CD4-positive, alpha-beta memory T cell (primary cell): ENCODE measurements at regions of chr18 and their contacts with region 1.

Region 1: GRCh38 chr18:13137670-13138419 is 80.7 kb upstream of the LDLRAD4 start:
- DNase-seq: peak; percentile 77 to 86 (median 81)
- H3K4me3 ChIP-seq: peak overlapping the region; percentile 69 to 92
- H3K4me3 Mint-ChIP-seq: peak overlapping the region; percentile 90 to 100 (median 97)
- H3K27ac ChIP-seq: peak overlapping the region; percentile 54
- H3K27ac Mint-ChIP-seq: peak overlapping the region; percentile 93 to 99 (median 96)
- H3K4me1 ChIP-seq: peaks cover 19% of the 10 kb centered on the region
- H3K4me1 Mint-ChIP-seq: peaks cover 19 to 29% (median 24%) of the 10 kb centered on the region in 4 donors
- H3K27me3 ChIP-seq: no peaks in the 10 kb centered on the region
- H3K27me3 Mint-ChIP-seq: no peaks in the 10 kb centered on the region

Region 2: GRCh38 chr18:12990967-12991838 is 146.6 kb before region 1 on chr18 and contains the start of gene CEP192:
- CTCF ChIA-PET with region 1: no interaction called
- POLR2A ChIA-PET with region 1: interaction called, 5 read pairs
- intact Hi-C with region 1: loop called (anchors 5 kb)
- DNase-seq: peak; percentile 97 to 98 (median 98)
- H3K4me3 ChIP-seq: peak within 1 kb of the TSS; percentile 70 to 86
- H3K4me3 Mint-ChIP-seq: peak within 1 kb of the TSS; percentile 93 to 99 (median 98)
- H3K27ac ChIP-seq: peak within 1 kb of the TSS; percentile 93
- H3K27ac Mint-ChIP-seq: peak within 1 kb of the TSS; percentile 88 to 99 (median 97)
- H3K4me1 ChIP-seq: peaks cover 42% of the 10 kb centered on the region
- H3K4me1 Mint-ChIP-seq: peaks cover 0 to 29% (median 23%) of the 10 kb centered on the region in 4 donors
- H3K27me3 ChIP-seq: no peaks in the 10 kb centered on the region
- H3K27me3 Mint-ChIP-seq: no peaks in the 10 kb centered on the region
- total RNA-seq, gene CEP192: 42.5 to 45.5 TPM

Region 3: GRCh38 chr18:13124411-13124810 is 13.4 kb before region 1 on chr18:
- CTCF ChIA-PET with region 1: interaction called, 6 read pairs
- POLR2A ChIA-PET with region 1: interaction called, 17 read pairs
- intact Hi-C with region 1: no loop called
- DNase-seq: no peak
- H3K4me3 ChIP-seq: no peak overlapping the region
- H3K4me3 Mint-ChIP-seq: no peak overlapping the region
- H3K27ac ChIP-seq: no peak overlapping the region
- H3K27ac Mint-ChIP-seq: peak overlapping the region in 1 of 7 donors; percentile 17
- H3K4me1 ChIP-seq: no peaks in the 10 kb centered on the region
- H3K4me1 Mint-ChIP-seq: no peaks in the 10 kb centered on the region
- H3K27me3 ChIP-seq: no peaks in the 10 kb centered on the region
- H3K27me3 Mint-ChIP-seq: no peaks in the 10 kb centered on the region

Region 4: GRCh38 chr18:13159579-13159978 is 21.7 kb after region 1 on chr18:
- CTCF ChIA-PET with region 1: interaction called, 12 read pairs
- POLR2A ChIA-PET with region 1: no interaction called
- intact Hi-C with region 1: no loop called
- DNase-seq: peak in 4 of 5 donors; percentile 48 to 58 (median 56)
- H3K4me3 ChIP-seq: no peak overlapping the region
- H3K4me3 Mint-ChIP-seq: peak overlapping the region in 2 of 8 donors; percentile 23 to 43
- H3K27ac ChIP-seq: no peak overlapping the region
- H3K27ac Mint-ChIP-seq: no peak overlapping the region
- H3K4me1 ChIP-seq: no peaks in the 10 kb centered on the region
- H3K4me1 Mint-ChIP-seq: peaks cover 0 to 5% (median 2%) of the 10 kb centered on the region in 4 donors
- H3K27me3 ChIP-seq: no peaks in the 10 kb centered on the region
- H3K27me3 Mint-ChIP-seq: peaks cover 2 to 3% of the 10 kb centered on the region in 2 donors

Region 5: DNA sequence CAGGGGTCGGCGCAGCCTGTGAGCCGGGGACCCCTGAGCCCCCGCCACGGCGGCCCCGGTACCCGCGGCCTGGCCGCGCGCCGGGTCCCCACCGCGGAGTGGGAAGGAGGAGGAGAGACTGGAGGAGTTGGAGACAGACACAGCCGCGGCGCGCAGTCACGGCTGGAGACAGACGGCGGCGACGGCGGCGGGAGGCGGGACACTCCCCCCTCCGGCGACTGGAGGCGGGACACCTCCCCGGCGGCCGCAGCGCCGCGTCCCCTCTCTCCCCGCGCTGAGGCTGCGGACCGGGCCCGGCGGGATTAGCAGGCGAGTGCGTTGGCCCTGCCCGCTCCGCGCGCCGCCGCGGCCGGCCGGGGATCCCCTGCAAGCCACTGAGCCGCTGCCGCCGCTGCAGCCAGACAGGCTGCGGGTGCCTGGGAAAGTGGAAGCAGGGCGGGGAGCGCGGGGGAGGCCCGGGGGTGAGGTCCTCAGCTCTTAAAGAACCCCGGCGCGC is 79.7 kb after region 1 on chr18:
- CTCF ChIA-PET with region 1: no interaction called
- POLR2A ChIA-PET with region 1: no interaction called
- intact Hi-C with region 1: no loop called
- DNase-seq: peak; percentile 58 to 71 (median 63)
- H3K4me3 ChIP-seq: peak overlapping the region in 1 of 2 donors; percentile 24
- H3K4me3 Mint-ChIP-seq: peak overlapping the region in 1 of 8 donors; percentile 45
- H3K27ac ChIP-seq: no peak overlapping the region
- H3K27ac Mint-ChIP-seq: no peak overlapping the region
- H3K4me1 ChIP-seq: peaks cover 26% of the 10 kb centered on the region
- H3K4me1 Mint-ChIP-seq: peaks cover 13 to 31% (median 24%) of the 10 kb centered on the region in 4 donors
- H3K27me3 ChIP-seq: no peaks in the 10 kb centered on the region
- H3K27me3 Mint-ChIP-seq: peaks cover 4 to 37% of the 10 kb centered on the region in 2 donors

Region 6: GRCh38 chr18:13381944-13382365 is 244.1 kb after region 1 on chr18:
- CTCF ChIA-PET with region 1: no interaction called
- POLR2A ChIA-PET with region 1: interaction called, 3 read pairs
- intact Hi-C with region 1: loop called (anchors 5 kb)
- DNase-seq: peak; percentile 56 to 76 (median 69)
- H3K4me3 ChIP-seq: peak overlapping the region; percentile 40 to 63
- H3K4me3 Mint-ChIP-seq: peak overlapping the region; percentile 83 to 97 (median 90)
- H3K27ac ChIP-seq: peak overlapping the region; percentile 89
- H3K27ac Mint-ChIP-seq: peak overlapping the region; percentile 98 to 100 (median 99)
- H3K4me1 ChIP-seq: peaks cover 68% of the 10 kb centered on the region
- H3K4me1 Mint-ChIP-seq: peaks cover 49 to 76% (median 71%) of the 10 kb centered on the region in 4 donors
- H3K27me3 ChIP-seq: no peaks in the 10 kb centered on the region
- H3K27me3 Mint-ChIP-seq: no peaks in the 10 kb centered on the region

Region 7: GRCh38 chr18:13611601-13612195 is 473.9 kb after region 1 on chr18:
- CTCF ChIA-PET with region 1: no interaction called
- POLR2A ChIA-PET with region 1: no interaction called
- intact Hi-C with region 1: loop called (anchors 5 kb)
- DNase-seq: no peak
- H3K4me3 ChIP-seq: peak overlapping the region; percentile 34 to 51
- H3K4me3 Mint-ChIP-seq: peak overlapping the region; percentile 78 to 96 (median 88)
- H3K27ac ChIP-seq: peak overlapping the region; percentile 11
- H3K27ac Mint-ChIP-seq: peak overlapping the region; percentile 83 to 96 (median 91)
- H3K4me1 ChIP-seq: peaks cover 81% of the 10 kb centered on the region
- H3K4me1 Mint-ChIP-seq: peaks cover 68 to 85% (median 76%) of the 10 kb centered on the region in 4 donors
- H3K27me3 ChIP-seq: no peaks in the 10 kb centered on the region
- H3K27me3 Mint-ChIP-seq: no peaks in the 10 kb centered on the region

Region 8: DNA sequence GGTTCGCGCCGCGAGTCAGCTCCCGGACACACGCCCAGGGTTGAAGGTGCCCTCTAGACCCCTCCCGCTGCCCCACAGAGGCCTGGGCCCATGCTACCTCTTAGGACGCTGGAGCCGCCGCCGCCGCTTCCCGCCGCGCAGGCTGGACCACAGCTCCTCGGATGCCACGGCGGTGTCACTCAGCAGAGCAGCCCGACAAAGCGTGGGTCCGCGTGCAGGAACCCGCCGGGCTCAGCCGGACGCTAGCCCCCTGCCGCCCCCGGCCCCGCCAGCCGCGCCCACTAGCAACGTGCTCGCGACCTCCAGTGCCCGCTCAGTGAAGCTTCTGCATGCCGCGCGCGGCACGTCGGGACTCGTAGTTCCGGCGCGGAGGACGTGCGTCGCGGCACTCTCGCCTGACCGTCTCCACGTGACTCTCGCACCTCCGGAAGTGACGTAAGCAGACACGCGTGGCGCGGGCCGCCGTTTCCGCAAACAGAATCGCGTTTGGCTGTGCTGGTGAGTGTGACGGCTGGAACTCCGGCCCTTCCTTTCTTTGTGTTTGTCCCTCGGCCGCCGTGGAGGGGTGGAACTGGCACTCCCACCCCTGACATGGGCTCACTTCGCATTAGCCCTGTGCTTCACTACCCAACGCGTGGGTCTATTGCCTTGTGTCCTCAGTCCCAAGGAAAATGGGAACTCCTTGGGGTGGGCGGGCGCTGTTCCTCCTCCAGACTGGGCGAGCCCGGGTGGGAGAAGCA is 588.6 kb after region 1 on chr18 and contains the starts of genes FAM210A and RNMT:
- CTCF ChIA-PET with region 1: no interaction called
- POLR2A ChIA-PET with region 1: interaction called, 3 read pairs
- intact Hi-C with region 1: loop called (anchors 2 kb)
- DNase-seq: peak; percentile 90 to 95 (median 92)
- H3K4me3 ChIP-seq: peak within 1 kb of the TSS; percentile 76 to 78
- H3K4me3 Mint-ChIP-seq: peak within 1 kb of the TSS; percentile 87 to 97 (median 92)
- H3K27ac ChIP-seq: peak within 1 kb of the TSS; percentile 96
- H3K27ac Mint-ChIP-seq: peak within 1 kb of the TSS; percentile 85 to 98 (median 97)
- H3K4me1 ChIP-seq: peaks cover 49% of the 10 kb centered on the region
- H3K4me1 Mint-ChIP-seq: peaks cover 41 to 67% (median 51%) of the 10 kb centered on the region in 4 donors
- H3K27me3 ChIP-seq: no peaks in the 10 kb centered on the region
- H3K27me3 Mint-ChIP-seq: no peaks in the 10 kb centered on the region
- total RNA-seq, gene FAM210A: 9.4 to 10.2 TPM
- total RNA-seq, gene RNMT: 53.7 to 55.0 TPM